Sigmoid colon (tissue), 7 donors: ENCODE measurements at regions of chr1 and their contacts with region 1.

Region 1: DNA sequence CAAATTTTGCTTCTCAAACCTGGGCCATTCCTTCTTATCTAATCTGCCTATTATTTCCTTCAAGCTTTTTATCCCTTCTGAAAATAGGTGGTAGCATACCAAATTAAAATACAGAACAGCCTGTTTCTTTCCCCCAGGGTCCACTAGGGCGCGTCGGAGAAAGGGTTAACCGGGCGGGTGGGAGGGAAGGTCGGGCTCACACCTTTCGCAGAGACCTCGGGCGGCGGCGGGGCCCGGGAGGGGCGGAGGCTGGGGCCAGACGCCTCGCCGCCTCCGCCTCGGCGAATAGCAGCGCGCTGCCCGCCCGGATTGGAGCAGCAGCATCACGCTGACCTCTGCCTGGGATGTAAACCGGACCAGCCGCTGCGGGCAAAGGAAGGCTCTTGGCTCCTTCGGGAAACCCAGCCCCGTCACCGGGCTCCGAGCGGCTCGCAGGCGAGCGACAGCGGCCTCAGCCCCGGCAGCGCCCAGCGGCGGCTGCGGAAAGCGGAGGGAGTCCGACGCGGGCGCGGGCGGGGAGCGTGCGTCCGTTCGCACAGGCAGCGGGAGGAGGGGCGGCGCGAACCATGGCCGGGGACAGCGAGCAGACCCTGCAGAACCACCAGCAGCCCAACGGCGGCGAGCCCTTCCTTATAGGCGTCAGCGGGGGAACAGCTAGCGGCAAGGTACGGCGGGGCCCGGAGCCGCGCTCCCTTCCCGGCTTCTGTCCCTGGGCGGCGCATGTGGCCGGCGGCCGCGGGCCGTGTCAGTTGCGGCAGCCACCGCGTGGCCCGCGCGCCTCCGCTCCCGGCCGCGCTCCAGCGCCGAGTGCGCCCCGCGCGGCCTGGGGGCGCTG is at the start of gene UCK2:
- DNase-seq: peak; percentile 87
- H3K4me3 ChIP-seq: peak within 1 kb of the TSS; percentile 60 to 94 (median 82)
- H3K27ac ChIP-seq: peak within 1 kb of the TSS; percentile 90 to 94 (median 94)
- H3K4me1 ChIP-seq: peaks cover 0 to 18% (median 13%) of the 10 kb centered on the region in 4 donors
- H3K27me3 ChIP-seq: no peaks in the 10 kb centered on the region
- CTCF ChIP-seq: no peak
- EP300 ChIP-seq: no peak
- POLR2A ChIP-seq: peak in 1 of 2 donors; percentile 13
- total RNA-seq, gene UCK2: 8.3 to 29.3 (median 14.3) TPM

Region 2: GRCh38 chr1:165603810-165604209 is 223.7 kb before region 1 on chr1:
- intact Hi-C with region 1: loop called (anchors 2 kb)
- DNase-seq: no peak
- H3K4me3 ChIP-seq: no peak overlapping the region
- H3K27ac ChIP-seq: no peak overlapping the region
- H3K4me1 ChIP-seq: peaks cover 0 to 2% (median under 1%) of the 10 kb centered on the region in 4 donors
- H3K27me3 ChIP-seq: no peaks in the 10 kb centered on the region
- CTCF ChIP-seq: no peak
- EP300 ChIP-seq: no peak
- POLR2A ChIP-seq: no peak

Region 3: GRCh38 chr1:165630629-165631341 is 196.7 kb before region 1 on chr1 and contains the start of gene MGST3:
- intact Hi-C with region 1: loop called (anchors 2 kb)
- DNase-seq: peak; percentile 97
- H3K4me3 ChIP-seq: peak within 1 kb of the TSS; percentile 55 to 88 (median 74)
- H3K27ac ChIP-seq: peak within 1 kb of the TSS; percentile 81 to 93 (median 90)
- H3K4me1 ChIP-seq: peaks cover 0 to 46% (median 40%) of the 10 kb centered on the region in 4 donors
- H3K27me3 ChIP-seq: no peaks in the 10 kb centered on the region
- CTCF ChIP-seq: no peak
- EP300 ChIP-seq: no peak
- POLR2A ChIP-seq: peak; percentile 78 to 81
- total RNA-seq, gene MGST3: 162 to 269 (median 201) TPM

Region 4: DNA sequence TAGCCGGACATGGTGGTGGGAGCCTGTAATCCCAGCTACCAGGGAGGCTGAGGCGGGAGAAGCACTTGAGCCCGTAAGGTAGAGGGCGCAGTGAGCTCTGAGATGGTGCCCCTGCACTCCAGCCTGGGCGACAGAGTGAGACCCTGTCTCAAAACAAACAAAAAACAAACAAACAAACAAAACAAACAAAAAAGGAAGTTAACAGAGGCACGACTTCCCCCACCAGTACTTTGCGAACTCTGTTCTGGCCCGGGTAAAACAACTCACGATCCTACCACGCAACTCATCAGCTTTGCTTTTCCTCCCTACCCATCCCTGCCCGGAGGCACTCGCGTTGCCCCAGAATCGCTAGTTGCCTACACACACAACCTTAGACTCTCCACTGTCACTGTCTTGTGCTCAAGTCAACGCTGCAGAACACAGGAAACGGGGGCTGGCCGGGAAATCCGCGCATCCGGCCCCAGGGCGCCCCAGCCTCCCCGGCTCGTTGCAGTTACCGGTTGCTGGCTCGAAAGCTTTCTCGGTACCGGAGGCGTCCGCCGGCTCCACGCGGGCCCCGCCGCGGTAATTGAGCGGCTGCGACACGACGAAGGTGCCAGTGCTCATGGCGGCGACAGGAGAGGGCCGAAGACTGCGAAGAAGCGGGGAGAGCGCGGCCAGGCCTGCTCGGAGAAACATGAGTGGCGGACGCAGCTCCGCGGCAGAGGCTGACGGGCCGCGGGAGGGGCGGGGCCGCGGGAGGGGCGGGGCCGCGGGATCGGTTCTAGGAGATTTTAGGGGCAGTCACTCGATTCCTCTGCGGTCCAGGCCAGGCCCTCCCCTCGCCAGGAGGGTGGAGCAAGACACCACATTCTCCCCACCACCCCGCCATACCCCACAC is 129.4 kb before region 1 on chr1 and contains the start of gene ALDH9A1:
- intact Hi-C with region 1: loop called (anchors 5 kb)
- DNase-seq: peak; percentile 95
- H3K4me3 ChIP-seq: peak within 1 kb of the TSS; percentile 66 to 79 (median 70)
- H3K27ac ChIP-seq: peak within 1 kb of the TSS; percentile 91 to 97 (median 94)
- H3K4me1 ChIP-seq: peaks cover 0 to 32% (median 23%) of the 10 kb centered on the region in 4 donors
- H3K27me3 ChIP-seq: no peaks in the 10 kb centered on the region
- CTCF ChIP-seq: peak in 3 of 4 experiments; percentile 12 to 46 (median 36)
- EP300 ChIP-seq: no peak
- POLR2A ChIP-seq: peak; percentile 64 to 78
- total RNA-seq, gene ALDH9A1: 59.4 to 98.5 (median 86.9) TPM

Region 5: GRCh38 chr1:165768513-165769394 is 58.7 kb before region 1 on chr1 and contains the start of gene TMCO1:
- intact Hi-C with region 1: loop called (anchors 2 kb)
- DNase-seq: peak; percentile 98
- H3K4me3 ChIP-seq: peak within 1 kb of the TSS; percentile 72 to 85 (median 78)
- H3K27ac ChIP-seq: peak within 1 kb of the TSS; percentile 85 to 92 (median 88)
- H3K4me1 ChIP-seq: peaks cover 0 to 45% (median 22%) of the 10 kb centered on the region in 4 donors
- H3K27me3 ChIP-seq: no peaks in the 10 kb centered on the region
- CTCF ChIP-seq: no peak
- EP300 ChIP-seq: peak in 1 of 4 donors; percentile 57
- POLR2A ChIP-seq: peak; percentile 41 to 58
- total RNA-seq, gene TMCO1: 36.7 to 71.3 (median 43.3) TPM

Region 6: DNA sequence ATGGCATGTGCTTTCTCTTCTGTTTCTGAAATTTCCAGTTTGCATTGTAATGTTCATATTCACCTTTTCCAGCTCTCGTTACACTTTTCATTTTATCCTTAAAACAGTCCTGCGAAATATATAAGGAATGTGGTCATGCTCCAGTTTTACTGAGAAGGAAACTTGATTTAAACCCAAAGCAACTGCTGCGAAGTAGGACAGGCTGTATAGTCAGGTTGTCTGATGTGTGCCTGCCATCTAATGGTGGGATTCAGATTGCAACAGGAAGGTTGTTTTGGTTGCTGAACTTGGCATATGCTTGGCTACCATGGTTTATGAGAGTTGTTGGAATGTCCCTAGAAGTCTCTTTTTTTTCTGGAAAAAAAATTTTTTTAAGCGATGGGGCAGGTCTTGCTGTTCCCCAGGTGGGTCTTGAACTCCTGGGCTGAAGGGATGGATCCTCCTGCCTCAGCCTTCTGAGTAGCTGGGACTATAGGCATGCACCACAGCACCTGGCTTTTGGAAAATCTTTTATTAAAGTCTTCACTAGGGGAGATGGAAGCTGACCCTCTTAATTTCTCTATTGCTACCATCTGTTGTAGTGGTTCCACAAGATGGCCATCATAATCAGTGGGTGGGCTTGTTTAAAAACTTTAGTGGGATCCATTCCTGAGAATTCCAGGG is 86.8 kb after region 1 on chr1:
- intact Hi-C with region 1: loop called (anchors 5 kb)
- DNase-seq: peak; percentile 69
- H3K4me3 ChIP-seq: no peak overlapping the region
- H3K27ac ChIP-seq: no peak overlapping the region
- H3K4me1 ChIP-seq: peaks cover 0 to 6% (median 0%) of the 10 kb centered on the region in 4 donors
- H3K27me3 ChIP-seq: no peaks in the 10 kb centered on the region
- CTCF ChIP-seq: peak; percentile 78 to 89 (median 88)
- EP300 ChIP-seq: no peak
- POLR2A ChIP-seq: no peak